ENCODE measurements at regions of chr5 and their contacts with region 1.

Region 1: GRCh38 chr5:34656001-34656699 is at the start of gene RAI14:
- DNase-seq: peak; percentile 62
- H3K4me3 ChIP-seq: peak within 1 kb of the TSS; percentile 77
- H3K27ac ChIP-seq: peak within 1 kb of the TSS; percentile 55
- H3K4me1 ChIP-seq: peaks cover 7% of the 10 kb centered on the region
- H3K27me3 ChIP-seq: no peaks in the 10 kb centered on the region
- CTCF ChIP-seq: no peak
- total RNA-seq, gene RAI14: 23.6 and 40.0 TPM in 2 replicates

Region 2: DNA sequence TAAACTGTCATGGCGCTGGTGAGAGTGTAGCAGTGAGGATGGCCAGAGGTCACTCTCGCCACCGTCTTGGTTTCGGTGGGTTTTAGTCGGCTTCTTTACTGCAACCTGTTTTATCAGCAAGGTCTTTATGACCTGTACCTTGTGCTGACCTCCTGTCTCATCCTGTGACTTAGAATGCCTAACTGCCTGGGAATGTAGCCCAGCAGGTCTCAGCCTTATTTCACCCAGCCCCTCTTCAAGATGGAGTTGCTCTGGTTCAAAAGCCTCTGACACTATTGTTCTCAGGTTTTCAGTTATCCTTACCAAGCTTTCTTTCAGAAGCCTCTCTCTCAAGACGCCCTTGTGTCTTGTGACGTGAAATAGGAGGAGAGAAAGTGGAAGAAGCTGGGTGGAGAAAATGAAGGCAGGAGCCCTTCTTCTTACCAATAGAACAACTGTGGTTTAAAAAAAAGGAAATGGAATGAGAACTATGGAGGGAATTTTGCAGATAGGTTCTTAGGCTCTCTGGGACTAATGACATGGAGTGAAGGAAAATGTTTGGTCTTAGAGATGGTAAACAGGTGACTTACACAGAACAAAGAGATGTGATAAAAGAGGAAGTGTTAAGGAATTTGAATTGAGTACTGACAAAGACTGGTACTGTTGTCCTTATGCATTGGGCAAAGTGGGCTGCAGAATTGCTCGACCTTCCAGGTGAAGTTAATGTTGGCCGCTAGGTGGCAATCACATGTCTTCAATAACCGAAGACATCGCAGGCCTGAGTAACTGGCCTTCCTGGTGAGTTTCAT is 133.4 kb before region 1 on chr5:
- CTCF ChIA-PET with region 1: no interaction called
- POLR2A ChIA-PET with region 1: no interaction called
- intact Hi-C with region 1: loop called (anchors 5 kb)
- DNase-seq: peak; percentile 78
- H3K4me3 ChIP-seq: no peak overlapping the region
- H3K27ac ChIP-seq: no peak overlapping the region
- H3K4me1 ChIP-seq: no peaks in the 10 kb centered on the region
- H3K27me3 ChIP-seq: no peaks in the 10 kb centered on the region
- CTCF ChIP-seq: peak; percentile 84

Region 3: GRCh38 chr5:35029333-35029732 is 373.2 kb after region 1 on chr5:
- CTCF ChIA-PET with region 1: no interaction called
- POLR2A ChIA-PET with region 1: no interaction called
- intact Hi-C with region 1: no loop called
- DNase-seq: no peak
- H3K4me3 ChIP-seq: no peak overlapping the region
- H3K27ac ChIP-seq: no peak overlapping the region
- H3K4me1 ChIP-seq: no peaks in the 10 kb centered on the region
- H3K27me3 ChIP-seq: no peaks in the 10 kb centered on the region
- CTCF ChIP-seq: no peak

Measured in A673 (cell line).